ENCODE measurements at regions of chr11 and their contacts with region 1.

Region 1: DNA sequence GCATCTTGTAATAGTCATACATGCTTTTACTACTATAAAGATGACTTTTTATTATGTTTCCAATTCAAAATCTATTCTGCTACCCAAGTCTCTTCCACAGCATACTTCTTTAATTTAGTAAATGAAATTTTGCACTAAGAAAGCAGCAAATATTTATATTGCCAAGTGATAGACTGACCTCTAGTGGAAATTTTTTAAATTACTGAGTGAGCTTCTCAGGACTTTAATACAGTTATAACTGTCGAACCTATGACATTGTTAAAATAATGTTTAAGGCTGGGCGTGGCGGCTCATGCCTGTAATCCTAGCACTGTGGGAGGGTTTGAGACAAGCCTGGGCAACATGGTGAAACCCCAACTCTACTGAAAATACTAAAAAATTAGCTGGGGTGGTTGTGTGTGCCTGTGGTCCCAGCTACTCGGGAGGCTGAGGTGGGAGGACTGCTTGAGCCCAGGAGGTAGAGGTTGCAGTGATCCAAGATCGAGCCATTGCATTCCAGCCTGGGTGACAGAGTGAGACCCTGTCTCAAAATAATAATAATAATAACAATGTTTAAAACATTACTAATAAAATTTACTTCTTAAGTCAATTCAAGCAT is 27.3 kb downstream of the STK33 start:
- DNase-seq: no peak
- H3K4me3 ChIP-seq: no peak overlapping the region
- H3K27ac ChIP-seq: no peak overlapping the region
- H3K4me1 ChIP-seq: no peaks in the 10 kb centered on the region
- H3K27me3 ChIP-seq: no peaks in the 10 kb centered on the region
- CTCF ChIP-seq: peak; percentile 48 to 68 (median 54)

Region 2: DNA sequence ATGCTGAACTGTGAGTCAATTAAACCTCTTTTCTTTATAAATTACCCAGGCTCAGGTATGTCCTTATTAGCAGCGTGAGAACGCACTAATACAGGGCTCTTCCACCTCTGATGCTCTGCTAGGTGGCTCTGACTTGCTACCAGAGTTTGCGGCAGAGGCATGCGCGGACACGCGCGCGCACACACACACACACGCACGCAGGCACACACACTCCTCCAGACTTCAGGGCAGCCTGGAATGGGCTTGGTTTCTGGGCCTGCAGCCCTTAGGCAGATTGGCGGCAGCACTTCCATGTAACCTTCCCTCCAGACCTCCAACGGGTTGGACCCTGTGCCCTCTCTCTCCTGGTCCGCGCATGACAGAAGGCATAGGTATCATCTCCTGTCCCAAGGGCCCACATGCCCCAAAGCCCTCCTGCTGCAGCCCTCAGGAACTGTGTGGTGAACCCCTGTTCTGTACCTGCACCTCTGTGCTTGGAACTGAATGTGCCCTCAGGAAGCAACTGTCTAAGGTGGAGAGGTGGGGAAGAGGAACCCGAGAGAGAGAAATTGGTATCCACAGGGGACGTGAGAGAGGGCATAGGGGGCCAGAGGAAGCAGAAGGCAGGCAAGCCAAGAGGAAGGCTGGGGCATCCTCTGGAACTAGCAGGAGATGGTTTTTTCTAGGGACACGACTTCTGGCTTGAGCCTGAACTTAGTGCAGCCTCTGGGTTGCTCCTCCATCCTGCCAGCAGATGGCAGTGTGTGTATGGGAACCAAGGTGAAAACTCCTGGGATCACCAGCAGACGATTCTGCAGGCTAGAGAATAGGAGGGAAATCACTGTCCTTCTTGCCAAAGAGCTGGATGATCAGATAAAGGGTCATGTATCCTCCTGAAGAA is 374.5 kb before region 1 on chr11:
- intact Hi-C with region 1: loop called (anchors 1 kb)
- DNase-seq: no peak
- H3K4me3 ChIP-seq: no peak overlapping the region
- H3K27ac ChIP-seq: no peak overlapping the region
- H3K4me1 ChIP-seq: no peaks in the 10 kb centered on the region
- H3K27me3 ChIP-seq: no peaks in the 10 kb centered on the region
- CTCF ChIP-seq: peak; percentile 31 to 74 (median 66)

Region 3: GRCh38 chr11:8225589-8226036 is 341.1 kb before region 1 on chr11:
- intact Hi-C with region 1: loop called (anchors 1 kb)
- DNase-seq: peak in 1 of 2 donors; percentile 78
- H3K4me3 ChIP-seq: no peak overlapping the region
- H3K27ac ChIP-seq: no peak overlapping the region
- H3K4me1 ChIP-seq: peaks cover 0 to 4% of the 10 kb centered on the region in 2 donors
- H3K27me3 ChIP-seq: no peaks in the 10 kb centered on the region
- CTCF ChIP-seq: peak; percentile 81 to 90 (median 90)

Region 4: GRCh38 chr11:8545698-8546366 is 20.9 kb before region 1 on chr11:
- intact Hi-C with region 1: no loop called
- DNase-seq: no peak
- H3K4me3 ChIP-seq: no peak overlapping the region
- H3K27ac ChIP-seq: no peak overlapping the region
- H3K4me1 ChIP-seq: no peaks in the 10 kb centered on the region
- H3K27me3 ChIP-seq: no peaks in the 10 kb centered on the region
- CTCF ChIP-seq: no peak